ENCODE measurements at regions of chr6 and their contacts with region 1.

Region 1: DNA sequence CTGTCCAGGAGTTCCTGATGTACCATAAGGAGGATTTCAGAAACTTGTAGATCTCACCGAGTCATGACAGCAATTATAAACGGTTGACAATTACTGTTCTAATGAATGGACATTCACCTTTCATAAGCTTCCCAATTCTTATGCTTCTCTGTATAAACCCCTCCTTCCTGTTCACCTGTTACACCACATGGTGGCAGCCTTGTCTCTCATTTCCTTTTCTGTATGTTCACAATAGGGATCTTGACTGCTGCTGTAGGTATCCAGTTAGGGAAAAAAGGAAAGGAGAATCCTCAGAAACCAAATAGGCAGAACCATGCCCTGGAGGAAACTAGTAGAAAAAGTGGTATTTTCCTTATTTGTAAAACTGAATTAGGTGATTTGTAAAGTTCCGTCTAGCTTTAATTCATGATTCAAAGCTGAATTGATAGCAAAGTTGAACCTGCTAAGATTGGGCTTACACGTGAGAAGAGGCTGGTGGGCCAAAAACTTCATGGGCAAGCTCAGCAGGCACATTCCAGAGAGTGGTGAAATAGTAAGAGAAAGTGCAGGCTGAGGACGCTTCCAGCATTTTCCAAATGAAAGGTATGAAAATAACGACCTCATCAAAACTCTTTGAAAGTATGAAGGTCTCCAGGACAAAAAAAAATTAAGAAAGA is 29.0 kb upstream of the TBPL1 start:
- DNase-seq: peak; percentile 38 to 53
- ATAC-seq: peak; percentile 80 to 98
- H3K4me3 ChIP-seq: no peak overlapping the region
- H3K27ac ChIP-seq: no peak overlapping the region
- H3K4me1 ChIP-seq: no peaks in the 10 kb centered on the region
- H3K27me3 ChIP-seq: peaks cover 0 to 3% (median 0%) of the 10 kb centered on the region in 3 donors
- CTCF ChIP-seq: peak; percentile 67 to 89 (median 80)
- POLR2A ChIP-seq: no peak

Region 2: GRCh38 chr6:132893788-132894428 is 1030.2 kb before region 1 on chr6:
- in situ Hi-C with region 1: no loop called
- intact Hi-C with region 1: no loop called
- DNase-seq: no peak
- ATAC-seq: no peak
- H3K4me3 ChIP-seq: no peak overlapping the region
- H3K27ac ChIP-seq: no peak overlapping the region
- H3K4me1 ChIP-seq: no peaks in the 10 kb centered on the region
- H3K27me3 ChIP-seq: no peaks in the 10 kb centered on the region
- CTCF ChIP-seq: no peak
- POLR2A ChIP-seq: no peak

Region 3: DNA sequence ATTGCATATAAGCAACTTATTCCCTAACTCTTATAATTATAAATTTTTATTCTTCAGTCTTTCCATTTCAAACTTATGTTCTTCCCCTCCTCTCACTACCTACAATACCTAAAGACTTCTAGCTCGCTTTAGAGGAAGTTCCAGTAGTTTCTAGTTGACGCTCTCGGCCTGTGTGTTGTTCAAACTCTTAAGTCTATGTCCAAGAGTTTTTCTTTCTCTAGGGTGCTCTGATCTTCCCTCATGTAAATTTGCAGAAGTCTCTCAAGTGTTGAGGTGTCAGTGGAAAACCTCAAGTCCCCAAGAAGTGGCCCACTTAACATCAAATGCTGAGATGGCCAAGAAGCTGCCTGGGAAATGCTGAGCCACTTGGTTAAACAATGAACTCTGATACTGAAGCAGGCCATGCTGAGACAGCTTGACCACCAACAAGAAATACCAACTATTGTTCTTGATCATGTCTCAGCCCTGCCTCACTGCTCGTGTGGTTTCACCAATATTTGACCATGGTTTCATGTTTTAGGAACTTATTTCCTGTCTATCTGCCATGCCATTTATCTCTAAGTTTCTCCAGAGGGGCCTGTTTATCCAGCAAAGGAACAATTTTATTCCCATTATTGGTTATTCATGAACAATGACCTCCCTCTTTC is 136.1 kb before region 1 on chr6:
- in situ Hi-C with region 1: no loop called
- intact Hi-C with region 1: no loop called
- DNase-seq: no peak
- ATAC-seq: no peak
- H3K4me3 ChIP-seq: no peak overlapping the region
- H3K27ac ChIP-seq: no peak overlapping the region
- H3K4me1 ChIP-seq: no peaks in the 10 kb centered on the region
- H3K27me3 ChIP-seq: no peaks in the 10 kb centered on the region
- CTCF ChIP-seq: no peak
- POLR2A ChIP-seq: no peak

Region 4: DNA sequence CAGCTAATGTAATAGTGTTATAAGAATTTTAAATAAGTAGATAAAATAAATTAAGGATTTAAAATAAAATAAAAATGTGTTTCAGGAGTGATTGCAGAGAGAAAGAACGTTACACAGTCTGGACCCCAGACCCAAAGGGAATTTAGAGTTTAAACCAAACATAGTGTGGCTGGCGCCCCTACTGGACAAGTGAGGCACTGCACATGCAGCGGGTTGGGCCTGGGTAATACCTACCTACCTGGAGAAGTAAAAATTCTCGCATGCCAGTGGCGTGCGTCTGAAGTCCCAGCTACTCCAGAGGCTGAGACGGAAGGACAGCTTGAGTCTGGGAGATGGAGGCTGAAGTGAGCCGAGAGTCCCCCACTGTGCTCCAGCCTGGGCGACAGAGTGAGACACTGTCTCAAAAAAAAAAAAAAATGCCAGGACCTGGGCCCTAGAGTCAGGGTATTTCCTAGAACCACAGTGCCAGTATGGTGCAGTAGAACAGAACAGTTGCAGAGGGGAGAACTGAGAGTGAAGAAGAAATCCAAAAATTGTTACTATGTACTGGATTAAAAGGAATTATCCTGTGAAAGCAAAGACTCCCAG is 106.5 kb before region 1 on chr6:
- in situ Hi-C with region 1: no loop called
- intact Hi-C with region 1: no loop called
- DNase-seq: no peak
- ATAC-seq: no peak
- H3K4me3 ChIP-seq: no peak overlapping the region
- H3K27ac ChIP-seq: no peak overlapping the region
- H3K4me1 ChIP-seq: peaks cover 0 to 3% of the 10 kb centered on the region in 2 donors
- H3K27me3 ChIP-seq: no peaks in the 10 kb centered on the region
- CTCF ChIP-seq: peak in 1 of 5 experiments; percentile 35
- POLR2A ChIP-seq: no peak

Region 5: DNA sequence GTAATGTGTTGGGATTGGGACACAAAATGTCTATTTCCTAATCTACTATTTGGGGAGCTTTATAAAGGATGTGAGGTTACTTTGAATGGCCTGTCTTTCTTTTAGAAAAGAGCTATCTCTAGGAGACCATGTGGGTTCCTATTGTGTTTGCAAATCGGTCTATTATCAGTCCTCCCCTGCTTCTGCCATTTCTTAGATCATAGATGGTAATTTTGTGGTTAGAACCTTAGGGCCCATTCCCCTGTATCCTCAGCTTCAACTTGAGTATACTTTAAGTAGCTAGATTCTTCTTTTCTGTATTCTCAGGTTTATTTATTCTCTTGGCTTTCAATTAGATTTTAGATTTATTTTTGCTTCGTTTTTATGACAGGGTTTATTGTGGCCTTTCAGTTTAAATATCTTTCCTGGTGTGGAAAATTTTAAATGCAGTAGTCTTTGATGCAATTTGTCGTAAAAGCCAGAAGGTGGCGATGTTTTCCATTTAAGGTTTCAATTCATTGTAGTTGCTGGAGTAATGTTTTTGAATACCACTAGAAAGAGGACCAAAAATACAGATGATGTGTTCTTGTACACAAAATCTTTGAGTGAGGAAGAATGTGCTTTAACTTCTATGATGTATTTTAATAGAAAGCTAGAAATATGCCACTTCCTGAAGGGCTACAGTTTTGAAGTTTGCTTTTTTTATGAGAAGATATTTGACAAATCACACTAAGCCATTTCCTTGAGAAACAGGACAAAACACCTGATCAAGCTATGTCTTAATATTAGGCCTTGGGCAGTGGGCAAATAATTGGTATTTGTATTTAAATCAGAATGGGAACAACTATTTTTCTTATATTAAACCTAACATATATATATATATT is 49.3 kb after region 1 on chr6:
- in situ Hi-C with region 1: no loop called
- intact Hi-C with region 1: loop called (anchors 2 kb)
- DNase-seq: no peak
- ATAC-seq: peak in 1 of 2 donors; percentile 60
- H3K4me3 ChIP-seq: no peak overlapping the region
- H3K27ac ChIP-seq: no peak overlapping the region
- H3K4me1 ChIP-seq: peaks cover 10 to 22% of the 10 kb centered on the region in 2 donors
- H3K27me3 ChIP-seq: no peaks in the 10 kb centered on the region
- CTCF ChIP-seq: peak; percentile 60 to 80 (median 74)
- POLR2A ChIP-seq: no peak

Region 6: GRCh38 chr6:134063966-134064445 is 139.9 kb after region 1 on chr6:
- in situ Hi-C with region 1: loop called in 3 of 4 experiments (anchors 10 kb)
- intact Hi-C with region 1: loop called (anchors 1 kb)
- DNase-seq: peak; percentile 25 to 69
- ATAC-seq: peak; percentile 98
- H3K4me3 ChIP-seq: no peak overlapping the region
- H3K27ac ChIP-seq: peak overlapping the region in 3 of 4 donors; percentile 34 to 77 (median 50)
- H3K4me1 ChIP-seq: peaks cover 7 to 8% of the 10 kb centered on the region in 2 donors
- H3K27me3 ChIP-seq: no peaks in the 10 kb centered on the region
- CTCF ChIP-seq: peak; percentile 54 to 89 (median 75)
- POLR2A ChIP-seq: no peak

Region 7: DNA sequence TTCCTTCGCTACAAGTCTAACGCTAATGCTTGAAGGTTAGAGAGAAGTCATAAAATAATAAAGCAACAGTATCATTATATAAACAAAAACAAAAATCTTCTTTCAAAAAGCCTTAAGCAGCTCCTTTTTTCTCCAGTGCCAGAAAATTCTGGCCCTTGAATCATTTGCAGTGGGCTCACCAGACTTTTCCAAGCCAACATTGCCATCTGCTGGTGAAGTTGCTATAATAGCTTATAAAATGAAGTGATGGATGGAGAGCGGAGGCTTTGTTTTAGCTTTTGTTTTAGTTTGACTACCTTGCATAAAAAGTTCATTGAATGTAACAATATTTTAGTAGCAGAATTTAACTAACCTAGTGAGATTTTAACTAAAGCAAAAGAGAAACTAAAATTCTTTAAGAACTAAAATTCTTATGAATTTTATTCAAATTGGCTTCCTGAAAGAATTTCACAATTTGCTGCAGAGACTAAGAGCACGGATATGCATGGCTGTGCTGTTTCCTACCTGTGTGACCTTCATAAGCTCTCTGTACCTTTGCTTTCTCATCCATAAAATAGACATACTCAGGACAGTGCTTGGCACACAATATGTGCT is 173.1 kb after region 1 on chr6:
- in situ Hi-C with region 1: loop called (anchors 5 to 10 kb)
- intact Hi-C with region 1: loop called (anchors 1 kb)
- DNase-seq: peak in 1 of 2 donors; percentile 34
- ATAC-seq: peak in 1 of 2 donors; percentile 81
- H3K4me3 ChIP-seq: no peak overlapping the region
- H3K27ac ChIP-seq: no peak overlapping the region
- H3K4me1 ChIP-seq: no peaks in the 10 kb centered on the region
- H3K27me3 ChIP-seq: no peaks in the 10 kb centered on the region
- CTCF ChIP-seq: peak; percentile 50 to 67 (median 65)
- POLR2A ChIP-seq: no peak